ENCODE measurements at regions of chr5 and their contacts with region 1.

Region 1: DNA sequence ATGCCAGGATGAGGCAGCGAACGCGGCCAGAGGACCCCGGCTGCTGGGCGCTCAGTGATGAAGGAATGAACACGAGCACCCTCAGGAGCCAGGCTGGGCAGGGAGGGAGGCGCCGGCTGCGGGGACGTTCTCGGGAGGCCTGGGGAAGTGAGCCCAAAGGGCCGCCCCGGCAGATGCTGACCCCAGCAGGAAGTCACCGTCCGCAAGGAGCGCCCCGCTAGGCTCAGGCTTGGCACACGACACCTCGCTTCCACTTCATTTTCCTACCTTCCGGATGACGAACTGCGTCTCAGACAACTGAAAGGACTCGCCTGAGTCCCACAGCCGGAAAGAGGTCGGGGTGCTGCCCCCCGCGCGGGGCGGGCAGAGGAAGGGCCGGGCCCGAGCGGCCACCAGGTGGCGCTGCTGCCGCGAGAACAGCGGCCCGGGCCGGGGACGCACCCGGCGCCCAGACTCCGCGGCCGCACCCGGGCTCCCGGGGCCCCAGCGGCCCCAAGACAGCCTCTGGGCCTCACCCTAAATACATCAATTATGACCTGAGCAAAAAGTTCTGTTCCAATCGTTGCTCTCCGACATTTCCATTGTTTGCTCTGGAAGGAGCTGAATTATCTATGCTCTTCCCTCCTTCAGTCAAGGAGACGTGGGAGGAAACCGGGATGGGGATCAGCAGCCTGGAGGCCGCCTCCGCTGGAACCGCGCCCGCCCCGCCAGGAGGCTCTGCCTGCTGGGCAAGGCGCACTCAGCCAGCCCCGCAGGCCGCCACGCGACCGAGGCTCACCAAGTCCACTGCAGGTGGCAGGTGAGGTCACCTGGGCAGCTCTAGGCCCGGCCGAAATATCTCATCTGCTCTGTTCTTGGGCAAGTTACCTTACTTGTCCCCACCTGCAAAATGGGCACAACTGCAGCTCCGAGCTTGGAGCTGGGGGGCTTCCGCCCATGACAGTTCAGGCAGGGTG is 107.0 kb downstream of the ZNF354C start:
- DNase-seq: peak; percentile 44 to 94 (median 55)

Region 2: GRCh38 chr5:178695556-178695955 is 471.6 kb before region 1 on chr5:
- intact Hi-C with region 1: no loop called
- DNase-seq: no peak

Region 3: DNA sequence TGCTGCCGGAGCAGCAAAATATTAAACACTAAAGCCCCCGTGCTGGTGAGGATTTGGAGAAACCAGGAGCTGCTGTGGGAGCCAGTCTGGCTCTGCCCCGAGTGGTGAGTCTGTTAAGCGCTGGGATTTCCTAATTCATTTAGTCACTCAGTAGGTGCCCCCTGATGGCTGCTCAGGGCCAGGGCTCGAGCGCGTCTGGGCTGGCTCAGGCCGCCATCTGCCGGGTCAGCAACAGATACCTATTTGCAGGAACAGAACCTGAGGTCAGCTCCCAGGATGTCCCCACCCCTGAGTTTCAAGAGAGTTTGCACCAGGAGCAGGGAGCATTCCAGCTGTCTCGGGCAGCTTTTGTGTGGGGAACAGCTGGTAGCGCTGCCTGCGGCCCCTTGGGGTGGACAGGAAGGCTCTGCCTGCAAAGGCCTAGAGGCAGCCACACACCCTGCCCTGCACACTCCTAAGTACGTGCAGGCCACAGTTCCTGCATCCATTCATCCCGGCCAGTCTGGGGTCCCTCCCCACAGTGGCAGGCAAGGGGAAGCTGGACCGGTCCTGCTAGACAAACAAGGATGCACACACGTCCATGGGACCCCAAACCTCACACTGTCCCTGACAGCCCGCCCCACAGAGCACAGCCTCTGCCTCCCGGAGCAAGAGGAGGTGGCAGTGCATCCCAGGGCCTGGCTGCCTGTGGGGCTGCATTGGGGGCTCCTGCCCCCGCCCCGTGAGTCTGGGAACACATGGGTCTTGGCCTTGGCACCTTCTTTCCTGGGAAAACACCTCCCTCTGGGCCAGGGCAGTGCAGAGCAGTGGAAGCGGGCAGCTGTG is 94.3 kb after region 1 on chr5:
- intact Hi-C with region 1: loop called (anchors 2 kb)
- DNase-seq: peak in 8 of 10 donors; percentile 10 to 88 (median 37)

Region 4: DNA sequence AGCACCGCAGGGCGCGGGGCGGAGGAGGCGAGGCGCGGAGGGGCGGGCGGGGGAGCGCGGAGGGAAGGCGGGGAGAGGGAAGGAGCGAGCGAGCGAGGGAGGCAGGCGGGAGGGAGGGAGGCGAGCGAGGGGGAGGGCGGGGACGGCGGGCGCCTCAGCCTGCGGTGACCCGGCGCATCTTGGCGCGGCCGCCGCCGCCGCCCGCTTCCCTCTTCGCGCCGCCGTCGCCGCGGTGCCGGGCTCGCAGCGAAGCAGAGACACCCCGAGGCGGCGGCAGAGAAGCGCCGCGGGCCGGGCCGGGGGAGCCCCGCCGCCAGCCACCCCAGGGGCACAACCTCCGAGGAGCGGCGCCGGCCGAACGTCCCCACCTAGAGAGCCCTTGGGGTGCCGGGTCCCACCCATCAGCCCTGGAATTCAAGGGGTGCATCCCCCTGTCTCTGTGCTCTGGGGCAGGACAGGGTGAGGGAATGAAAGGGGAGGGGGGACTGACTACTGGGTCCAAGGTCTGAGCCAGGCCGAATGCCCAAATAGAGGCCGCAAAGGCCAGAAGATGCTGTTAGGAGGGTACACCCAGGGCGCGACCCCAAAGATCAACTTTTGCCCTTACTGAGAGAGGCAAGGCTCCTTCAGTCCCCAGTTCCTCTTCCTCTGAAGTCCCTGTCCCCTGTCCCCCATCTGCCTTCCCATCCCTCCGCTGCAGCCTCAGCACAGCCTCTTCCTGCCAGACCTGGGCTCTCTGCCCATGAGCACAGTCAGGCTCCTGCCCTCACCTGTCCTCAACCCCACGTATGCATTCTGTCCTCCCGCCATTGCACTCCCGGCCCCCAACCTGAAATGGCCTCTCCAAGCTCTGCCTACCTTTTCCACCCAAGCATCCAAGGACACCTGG is 178.5 kb after region 1 on chr5 and contains the start of gene ADAMTS2:
- intact Hi-C with region 1: loop called (anchors 5 kb)
- DNase-seq: peak in 9 of 10 donors; percentile 31 to 89 (median 52)

Region 5: DNA sequence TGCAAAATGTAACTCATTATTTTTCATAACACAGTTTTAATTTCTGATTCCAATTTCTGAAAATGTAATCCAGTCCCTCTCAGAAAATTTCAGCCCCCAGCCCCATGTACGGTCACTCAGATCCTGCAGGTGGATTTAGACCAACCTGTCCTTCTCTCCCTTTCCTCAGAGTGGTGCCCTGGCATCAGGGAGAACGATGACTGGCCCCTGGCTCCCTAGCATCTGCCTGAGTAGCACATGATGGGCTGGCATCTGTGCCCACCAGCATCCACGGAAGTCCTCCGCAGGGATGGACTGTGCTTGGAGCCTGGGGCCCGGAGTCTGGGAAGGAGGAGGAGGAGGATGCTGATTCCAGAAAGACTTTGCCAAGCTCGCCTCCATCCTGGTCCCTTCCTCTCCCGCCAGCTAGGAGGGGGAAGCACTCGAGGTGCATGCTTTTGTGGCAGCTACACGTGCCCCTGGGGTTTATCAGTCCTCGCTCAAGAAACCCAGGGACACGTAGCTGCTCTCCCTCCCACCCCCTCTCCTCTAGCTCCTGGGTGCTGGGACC is 328.8 kb after region 1 on chr5:
- intact Hi-C with region 1: loop called (anchors 1 kb)
- DNase-seq: peak in 5 of 10 donors; percentile 10 to 86 (median 34)